HepG2 (cell line): ENCODE measurements at regions of chr14 and their contacts with region 1.

Region 1: GRCh38 chr14:54133896-54134295 is 177.3 kb upstream of the BMP4 start:
- DNase-seq: peak; percentile 96
- ATAC-seq: peak; percentile 77
- H3K4me3 ChIP-seq: peak overlapping the region; percentile 5 to 36 (median 23); a peak in 2 of 6 replicates
- H3K27ac ChIP-seq: peak overlapping the region; percentile 83
- H3K4me1 ChIP-seq: peaks cover 92% of the 10 kb centered on the region
- H3K27me3 ChIP-seq: no peaks in the 10 kb centered on the region
- CTCF ChIP-seq: no peak
- EP300 ChIP-seq: peak in 1 of 2 experiments; percentile 95; a peak in 2 of 4 replicates
- POLR2A ChIP-seq: peak in 1 of 2 experiments; percentile 55; a peak in 2 of 4 replicates
- RAD21 ChIP-seq: 0 out of 2 replicates have a peak, but pooled peaks have one; percentile 26

Region 2: GRCh38 chr14:53767566-53767965 is 366.3 kb before region 1 on chr14:
- CTCF ChIA-PET with region 1: no interaction called
- POLR2A ChIA-PET with region 1: no interaction called
- in situ Hi-C with region 1: no loop called
- intact Hi-C with region 1: no loop called
- DNase-seq: no peak
- ATAC-seq: no peak
- H3K4me3 ChIP-seq: no peak overlapping the region
- H3K27ac ChIP-seq: no peak overlapping the region
- H3K4me1 ChIP-seq: peaks cover 11% of the 10 kb centered on the region
- H3K27me3 ChIP-seq: no peaks in the 10 kb centered on the region
- CTCF ChIP-seq: no peak
- EP300 ChIP-seq: no peak
- POLR2A ChIP-seq: no peak
- RAD21 ChIP-seq: no peak

Region 3: GRCh38 chr14:53946404-53947096 is 187.3 kb before region 1 on chr14:
- CTCF ChIA-PET with region 1: no interaction called
- POLR2A ChIA-PET with region 1: interaction called, 10 read pairs
- in situ Hi-C with region 1: loop called (anchors 5 kb)
- intact Hi-C with region 1: no loop called
- DNase-seq: no peak
- ATAC-seq: no peak; the same call in 2 of the 3 replicates
- H3K4me3 ChIP-seq: no peak overlapping the region
- H3K27ac ChIP-seq: no peak overlapping the region
- H3K4me1 ChIP-seq: peaks cover 77% of the 10 kb centered on the region
- H3K27me3 ChIP-seq: no peaks in the 10 kb centered on the region
- CTCF ChIP-seq: no peak
- EP300 ChIP-seq: no peak
- POLR2A ChIP-seq: no peak
- RAD21 ChIP-seq: no peak

Region 4: GRCh38 chr14:53979747-53980642 is 153.9 kb before region 1 on chr14:
- CTCF ChIA-PET with region 1: no interaction called
- POLR2A ChIA-PET with region 1: interaction called, 24 read pairs
- in situ Hi-C with region 1: no loop called
- intact Hi-C with region 1: loop called (anchors 5 kb)
- DNase-seq: peak; percentile 97
- ATAC-seq: peak; percentile 86
- H3K4me3 ChIP-seq: peak overlapping the region in 2 of 3 experiments; percentile 1 to 18; a peak in 2 of 6 replicates
- H3K27ac ChIP-seq: peak overlapping the region; percentile 99
- H3K4me1 ChIP-seq: peaks cover 75% of the 10 kb centered on the region
- H3K27me3 ChIP-seq: no peaks in the 10 kb centered on the region
- CTCF ChIP-seq: no peak
- EP300 ChIP-seq: peak; percentile 83 to 96; a peak in 3 of 4 replicates
- POLR2A ChIP-seq: no peak
- RAD21 ChIP-seq: no peak

Region 5: DNA sequence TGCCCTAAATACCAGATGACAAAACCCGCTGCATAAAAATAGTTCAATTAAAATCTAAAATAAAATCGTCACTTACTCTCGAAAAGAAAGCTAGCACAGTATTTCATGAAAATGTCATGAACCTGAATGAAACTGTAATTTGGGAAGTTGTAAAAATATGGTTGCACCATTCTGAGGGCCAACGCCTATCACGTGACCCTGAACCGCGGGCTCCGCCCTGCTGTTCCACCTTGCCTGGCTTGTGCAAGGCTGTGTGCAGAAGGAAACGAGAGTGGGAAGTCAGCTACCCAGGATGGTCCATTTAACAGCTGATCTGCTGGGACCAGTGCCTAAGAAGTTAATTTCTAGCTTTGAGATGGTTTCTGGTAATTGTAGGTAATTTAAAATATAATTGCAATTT is 85.6 kb before region 1 on chr14:
- CTCF ChIA-PET with region 1: no interaction called
- POLR2A ChIA-PET with region 1: interaction called, 13 read pairs
- in situ Hi-C with region 1: no loop called
- intact Hi-C with region 1: loop called (anchors 5 kb)
- DNase-seq: peak; percentile 15
- ATAC-seq: peak; percentile 63
- H3K4me3 ChIP-seq: no peak overlapping the region; a peak in 1 of 6 replicates
- H3K27ac ChIP-seq: peak overlapping the region; percentile 79
- H3K4me1 ChIP-seq: peaks cover 63% of the 10 kb centered on the region
- H3K27me3 ChIP-seq: no peaks in the 10 kb centered on the region
- CTCF ChIP-seq: no peak
- EP300 ChIP-seq: no peak
- POLR2A ChIP-seq: no peak
- RAD21 ChIP-seq: no peak

Region 6: GRCh38 chr14:54102051-54102456 is 31.8 kb before region 1 on chr14:
- CTCF ChIA-PET with region 1: no interaction called
- POLR2A ChIA-PET with region 1: interaction called, 12 read pairs
- in situ Hi-C with region 1: no loop called
- intact Hi-C with region 1: no loop called
- DNase-seq: peak; percentile 91
- ATAC-seq: peak; percentile 74
- H3K4me3 ChIP-seq: no peak overlapping the region
- H3K27ac ChIP-seq: peak overlapping the region; percentile 81
- H3K4me1 ChIP-seq: peaks cover 71% of the 10 kb centered on the region
- H3K27me3 ChIP-seq: no peaks in the 10 kb centered on the region
- CTCF ChIP-seq: no peak
- EP300 ChIP-seq: peak in 1 of 2 experiments; percentile 99; a peak in 2 of 4 replicates
- POLR2A ChIP-seq: no peak
- RAD21 ChIP-seq: no peak

Region 7: DNA sequence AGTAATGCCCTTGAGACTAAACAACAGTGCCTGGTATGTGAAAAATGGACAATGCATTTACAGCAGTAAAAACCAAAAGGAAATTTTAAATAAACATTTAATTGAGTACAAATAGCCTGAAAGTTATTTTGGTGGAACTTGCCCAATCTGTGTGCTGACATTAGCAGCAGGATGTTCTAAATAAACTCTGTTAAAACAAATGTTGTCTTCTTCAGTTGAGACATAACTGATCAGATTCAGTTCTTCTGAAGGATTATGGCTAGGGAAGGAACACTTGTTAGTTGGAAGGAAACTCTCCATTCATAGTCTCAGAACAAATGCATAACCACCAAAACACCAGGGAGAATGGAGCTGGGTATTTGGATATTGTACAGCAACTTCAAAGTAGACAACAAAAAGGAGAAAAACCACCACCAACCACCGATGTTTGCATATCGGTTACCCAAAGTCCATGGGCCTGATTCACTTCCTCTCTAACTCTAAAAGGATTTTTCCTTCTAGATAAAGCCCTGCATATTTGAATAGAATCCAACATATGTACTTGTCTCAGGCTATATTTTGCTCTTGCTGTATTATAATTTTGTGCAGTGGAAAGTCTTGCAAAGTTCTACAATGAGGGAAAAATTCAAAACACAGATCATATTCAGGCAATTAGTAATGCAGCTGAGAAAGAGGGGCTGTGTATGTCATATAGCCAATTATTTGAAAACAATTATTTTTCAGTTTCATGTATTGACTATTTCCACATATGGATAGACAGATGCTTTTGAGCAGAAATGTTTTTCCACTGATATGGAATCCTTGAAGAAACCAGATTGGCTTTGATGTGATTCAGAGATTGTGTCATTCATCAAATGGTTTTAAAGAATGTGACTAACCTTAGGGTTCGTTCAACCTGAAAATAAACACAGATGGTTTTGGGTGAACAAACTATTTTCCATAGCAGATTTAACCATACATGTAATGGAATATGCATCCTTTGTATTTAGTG is 25.1 kb before region 1 on chr14:
- CTCF ChIA-PET with region 1: no interaction called
- POLR2A ChIA-PET with region 1: interaction called, 23 read pairs
- in situ Hi-C with region 1: no loop called
- intact Hi-C with region 1: loop called (anchors 2 kb)
- DNase-seq: peak; percentile 96
- ATAC-seq: peak; percentile 94
- H3K4me3 ChIP-seq: no peak overlapping the region; a peak in 1 of 6 replicates
- H3K27ac ChIP-seq: peak overlapping the region; percentile 83
- H3K4me1 ChIP-seq: peaks cover 84% of the 10 kb centered on the region
- H3K27me3 ChIP-seq: no peaks in the 10 kb centered on the region
- CTCF ChIP-seq: no peak
- EP300 ChIP-seq: peak in 1 of 2 experiments; percentile 97; a peak in 3 of 4 replicates
- POLR2A ChIP-seq: no peak
- RAD21 ChIP-seq: 0 out of 2 replicates have a peak, but pooled peaks have one; percentile 27

Region 8: DNA sequence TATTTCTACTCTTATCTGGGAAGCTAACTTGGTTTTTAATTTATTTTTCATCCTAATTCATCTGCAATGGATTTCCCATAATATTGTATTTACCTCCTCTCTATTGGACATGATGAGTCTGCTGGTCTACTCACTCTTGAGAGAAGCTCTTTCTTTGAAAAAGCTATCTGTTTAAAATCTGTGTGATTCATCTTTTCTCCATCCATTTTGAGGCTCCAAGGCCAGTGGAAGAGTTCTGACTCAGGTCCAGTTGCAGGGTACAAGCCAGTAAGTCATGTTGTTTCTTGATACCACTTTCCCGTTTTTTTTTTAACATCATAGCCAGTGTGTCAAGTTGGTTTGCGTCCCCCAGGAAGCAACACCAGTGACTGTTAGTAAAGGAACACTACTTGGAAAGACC is 16.9 kb before region 1 on chr14:
- CTCF ChIA-PET with region 1: no interaction called
- POLR2A ChIA-PET with region 1: interaction called, 33 read pairs
- in situ Hi-C with region 1: no loop called
- intact Hi-C with region 1: no loop called
- DNase-seq: peak; percentile 66
- ATAC-seq: no peak
- H3K4me3 ChIP-seq: no peak overlapping the region
- H3K27ac ChIP-seq: peak overlapping the region; percentile 23
- H3K4me1 ChIP-seq: peaks cover 66% of the 10 kb centered on the region
- H3K27me3 ChIP-seq: no peaks in the 10 kb centered on the region
- CTCF ChIP-seq: no peak
- EP300 ChIP-seq: no peak
- POLR2A ChIP-seq: no peak
- RAD21 ChIP-seq: no peak

Region 9: GRCh38 chr14:54211551-54212308 is 77.8 kb after region 1 on chr14:
- CTCF ChIA-PET with region 1: no interaction called
- POLR2A ChIA-PET with region 1: no interaction called
- in situ Hi-C with region 1: no loop called
- intact Hi-C with region 1: no loop called
- DNase-seq: no peak
- ATAC-seq: no peak
- H3K4me3 ChIP-seq: no peak overlapping the region
- H3K27ac ChIP-seq: no peak overlapping the region
- H3K4me1 ChIP-seq: peaks cover 30% of the 10 kb centered on the region
- H3K27me3 ChIP-seq: no peaks in the 10 kb centered on the region
- CTCF ChIP-seq: no peak
- EP300 ChIP-seq: no peak
- POLR2A ChIP-seq: no peak
- RAD21 ChIP-seq: no peak